ENCODE measurements at regions of chr17 and their contacts with region 1.

Region 1: DNA sequence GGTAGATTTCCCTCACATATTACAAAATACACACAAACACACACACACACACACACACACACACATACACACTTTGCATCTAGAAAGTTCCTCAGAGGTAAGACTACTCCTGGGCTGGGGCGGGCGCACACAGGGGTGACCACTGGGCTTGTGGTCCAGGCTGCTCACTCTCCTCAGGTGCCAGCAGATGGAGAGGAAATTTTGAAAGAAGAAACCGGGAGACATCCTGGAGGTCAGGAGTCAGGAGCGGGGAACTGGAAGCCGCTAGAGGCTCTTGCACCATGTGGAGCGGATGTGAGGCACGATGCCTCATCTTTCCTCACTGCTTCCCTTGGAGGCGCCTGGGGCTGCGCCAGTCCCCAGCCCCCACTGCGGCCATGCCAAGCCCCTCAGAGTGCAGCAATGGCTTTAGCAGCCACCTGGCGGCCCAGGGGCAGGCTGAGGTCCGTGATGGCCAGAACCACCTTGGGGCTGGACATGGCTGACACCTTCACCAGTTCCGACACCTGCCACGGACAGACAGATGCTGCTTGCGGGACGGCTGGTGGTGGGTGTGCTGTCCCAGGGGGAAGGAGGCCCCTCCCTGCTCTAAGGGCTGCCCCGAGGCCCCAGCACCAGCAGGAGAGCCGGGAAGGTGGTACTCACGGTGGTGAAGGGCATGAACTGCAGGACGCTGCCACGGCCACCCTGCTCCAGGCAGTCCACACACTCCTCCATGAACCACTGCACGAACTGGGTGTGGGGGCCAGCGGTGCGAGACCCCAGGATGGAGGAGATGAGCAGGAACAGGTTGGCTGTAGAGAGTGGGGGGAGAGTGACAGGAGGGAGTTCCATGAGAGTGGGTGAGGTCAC is 4.1 kb downstream of the CSF3 start:
- DNase-seq: peak; percentile 84 to 94
- ATAC-seq: peak; percentile 44 to 45
- H3K4me3 ChIP-seq: peak overlapping the region in 2 of 4 donors; percentile 54 to 64
- H3K27ac ChIP-seq: peak overlapping the region; percentile 87 to 99 (median 94)
- H3K4me1 ChIP-seq: peaks cover 78 to 85% of the 10 kb centered on the region in 2 donors
- H3K27me3 ChIP-seq: no peaks in the 10 kb centered on the region
- CTCF ChIP-seq: peak in 4 of 5 experiments; percentile 25 to 39 (median 35)
- POLR2A ChIP-seq: peak; percentile 60 to 67

Region 2: GRCh38 chr17:39852239-39852638 is 167.1 kb before region 1 on chr17:
- in situ Hi-C with region 1: no loop called
- intact Hi-C with region 1: no loop called
- DNase-seq: no peak
- ATAC-seq: no peak
- H3K4me3 ChIP-seq: no peak overlapping the region
- H3K27ac ChIP-seq: no peak overlapping the region
- H3K4me1 ChIP-seq: no peaks in the 10 kb centered on the region
- H3K27me3 ChIP-seq: peaks cover 0 to 8% (median 5%) of the 10 kb centered on the region in 3 donors
- CTCF ChIP-seq: no peak
- POLR2A ChIP-seq: no peak

Region 3: DNA sequence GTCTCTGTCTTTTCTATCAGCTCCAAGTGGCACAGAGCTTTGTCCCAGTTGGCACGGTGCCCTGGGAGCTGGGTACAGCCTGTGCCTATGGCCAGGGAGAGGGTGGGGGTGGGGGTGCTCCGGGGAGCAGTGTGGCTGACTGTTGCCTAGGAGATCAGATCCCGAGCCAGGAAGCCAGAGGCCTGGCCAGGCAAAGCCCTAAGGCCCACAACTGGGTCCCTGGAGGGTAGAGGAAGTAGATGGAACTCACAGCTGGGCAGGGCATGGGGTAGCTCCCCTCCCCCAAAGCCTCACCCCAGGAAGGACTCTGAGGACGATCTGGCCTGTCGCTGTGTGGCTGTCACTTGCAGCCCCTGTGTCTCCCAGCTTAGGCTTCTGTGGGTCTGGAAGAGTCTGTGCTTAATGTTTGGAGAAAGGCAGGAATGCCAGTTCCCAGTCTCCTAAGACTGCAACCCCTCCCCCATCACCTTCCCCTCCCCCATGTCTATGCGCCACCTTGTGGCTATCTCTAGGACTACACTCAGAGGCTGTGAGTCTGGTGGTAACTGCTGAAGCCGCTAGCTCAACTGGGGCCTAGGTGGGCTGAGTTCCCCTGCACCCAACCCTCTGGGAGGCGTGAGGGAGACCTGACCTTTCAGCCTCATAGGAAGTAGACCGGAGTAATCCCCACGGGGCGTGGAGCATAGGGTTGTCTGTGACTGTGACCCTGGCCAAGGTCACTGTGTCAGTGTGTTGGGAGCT is 56.0 kb after region 1 on chr17:
- in situ Hi-C with region 1: no loop called
- intact Hi-C with region 1: loop called (anchors 2 kb)
- DNase-seq: peak; percentile 77 to 91
- ATAC-seq: peak; percentile 46 to 65
- H3K4me3 ChIP-seq: peak overlapping the region in 3 of 4 donors; percentile 14 to 21 (median 18)
- H3K27ac ChIP-seq: peak overlapping the region; percentile 100
- H3K4me1 ChIP-seq: peaks cover 63 to 68% of the 10 kb centered on the region in 2 donors
- H3K27me3 ChIP-seq: no peaks in the 10 kb centered on the region
- CTCF ChIP-seq: peak; percentile 92 to 98 (median 97)
- POLR2A ChIP-seq: no peak

Region 4: GRCh38 chr17:40091691-40092397 is 72.5 kb after region 1 on chr17:
- in situ Hi-C with region 1: no loop called
- intact Hi-C with region 1: loop called (anchors 2 kb)
- DNase-seq: peak in 1 of 2 donors; percentile 79
- ATAC-seq: peak in 1 of 2 donors; percentile 18
- H3K4me3 ChIP-seq: no peak overlapping the region
- H3K27ac ChIP-seq: peak overlapping the region; percentile 94 to 100 (median 98)
- H3K4me1 ChIP-seq: peaks cover 61 to 66% of the 10 kb centered on the region in 2 donors
- H3K27me3 ChIP-seq: no peaks in the 10 kb centered on the region
- CTCF ChIP-seq: no peak
- POLR2A ChIP-seq: peak; percentile 49 to 59

Region 5: GRCh38 chr17:40121181-40122135 is 102.1 kb after region 1 on chr17 and contains the start of gene MSL1:
- in situ Hi-C with region 1: no loop called
- intact Hi-C with region 1: no loop called
- DNase-seq: peak; percentile 84 to 89
- ATAC-seq: peak; percentile 75 to 76
- H3K4me3 ChIP-seq: peak within 1 kb of the TSS; percentile 69 to 100 (median 95)
- H3K27ac ChIP-seq: peak within 1 kb of the TSS; percentile 93 to 100 (median 99)
- H3K4me1 ChIP-seq: peaks cover 25 to 29% of the 10 kb centered on the region in 2 donors
- H3K27me3 ChIP-seq: no peaks in the 10 kb centered on the region
- CTCF ChIP-seq: no peak
- POLR2A ChIP-seq: peak; percentile 83 to 88
- total RNA-seq, gene MSL1: 75.7 to 96.3 (median 85.9) TPM